ENCODE measurements at regions of chr11 and their contacts with region 1.

Region 1: GRCh38 chr11:75280227-75280701 is 39.7 kb downstream of the TPBGL start:
- DNase-seq: peak; percentile 65
- H3K4me3 ChIP-seq: no peak overlapping the region
- H3K27ac ChIP-seq: no peak overlapping the region
- H3K4me1 ChIP-seq: no peaks in the 10 kb centered on the region
- H3K27me3 ChIP-seq: no peaks in the 10 kb centered on the region
- CTCF ChIP-seq: peak; percentile 95 to 98 (median 97)
- POLR2A ChIP-seq: no peak

Region 2: DNA sequence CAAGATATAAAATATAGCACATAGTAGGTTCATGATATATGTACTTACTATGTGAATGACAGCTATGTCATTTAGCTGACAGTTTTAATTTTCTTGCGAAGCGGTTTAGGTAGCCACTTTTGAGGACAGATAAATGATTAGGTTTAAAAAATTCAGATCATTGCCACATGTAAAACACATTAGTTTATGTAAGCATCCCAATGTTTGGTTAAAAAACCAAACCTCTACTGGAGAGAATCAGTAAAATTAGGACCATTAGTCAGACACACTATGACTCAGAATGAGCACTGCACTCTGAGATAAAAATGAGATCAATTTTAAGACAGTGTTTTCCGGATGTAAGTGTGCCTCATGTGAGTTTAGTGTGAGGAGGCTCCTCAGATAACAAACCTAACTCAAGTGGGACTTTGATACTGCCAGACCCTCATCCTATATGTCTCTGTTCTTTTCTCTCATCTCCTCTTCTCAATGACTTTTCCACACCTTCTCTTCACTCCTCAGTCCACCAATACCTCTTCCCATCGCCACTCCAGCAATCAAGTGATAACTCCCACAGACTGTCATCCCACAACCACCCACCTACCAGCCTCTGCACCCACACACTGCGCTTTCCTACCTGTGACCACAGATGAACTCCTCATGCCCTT is 176.8 kb before region 1 on chr11:
- intact Hi-C with region 1: no loop called
- DNase-seq: no peak
- H3K4me3 ChIP-seq: no peak overlapping the region
- H3K27ac ChIP-seq: no peak overlapping the region
- H3K4me1 ChIP-seq: no peaks in the 10 kb centered on the region
- H3K27me3 ChIP-seq: no peaks in the 10 kb centered on the region
- CTCF ChIP-seq: no peak
- POLR2A ChIP-seq: no peak

Region 3: DNA sequence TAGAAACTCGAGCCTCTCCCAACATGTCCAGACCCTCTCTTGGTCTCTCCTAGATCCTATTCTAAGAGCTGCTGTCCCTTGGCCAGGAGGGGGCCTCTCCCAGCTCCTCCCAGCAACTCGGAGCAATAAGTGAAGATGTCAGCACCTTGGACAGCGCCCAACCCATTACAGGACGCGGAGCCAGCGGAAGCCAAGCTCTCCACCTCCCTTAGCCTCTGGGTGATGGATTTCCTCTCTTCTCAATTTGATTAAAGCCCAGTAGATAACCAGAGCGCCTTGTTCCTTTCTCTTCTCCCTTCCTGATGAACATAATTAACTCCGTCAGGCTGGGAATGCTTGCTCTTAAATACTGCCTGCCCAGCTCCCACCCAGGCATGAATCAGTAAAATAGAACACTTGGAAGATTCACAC is 65.8 kb before region 1 on chr11:
- intact Hi-C with region 1: no loop called
- DNase-seq: peak; percentile 45
- H3K4me3 ChIP-seq: no peak overlapping the region
- H3K27ac ChIP-seq: no peak overlapping the region
- H3K4me1 ChIP-seq: no peaks in the 10 kb centered on the region
- H3K27me3 ChIP-seq: no peaks in the 10 kb centered on the region
- CTCF ChIP-seq: peak in 1 of 4 experiments; percentile 14
- POLR2A ChIP-seq: no peak

Region 4: GRCh38 chr11:75328426-75329277 is 48.4 kb after region 1 on chr11:
- intact Hi-C with region 1: loop called (anchors 5 kb)
- DNase-seq: peak; percentile 82
- H3K4me3 ChIP-seq: no peak overlapping the region
- H3K27ac ChIP-seq: peak overlapping the region; percentile 64 to 72
- H3K4me1 ChIP-seq: peaks cover 22% of the 10 kb centered on the region
- H3K27me3 ChIP-seq: no peaks in the 10 kb centered on the region
- CTCF ChIP-seq: peak; percentile 58 to 86 (median 80)
- POLR2A ChIP-seq: no peak

Region 5: DNA sequence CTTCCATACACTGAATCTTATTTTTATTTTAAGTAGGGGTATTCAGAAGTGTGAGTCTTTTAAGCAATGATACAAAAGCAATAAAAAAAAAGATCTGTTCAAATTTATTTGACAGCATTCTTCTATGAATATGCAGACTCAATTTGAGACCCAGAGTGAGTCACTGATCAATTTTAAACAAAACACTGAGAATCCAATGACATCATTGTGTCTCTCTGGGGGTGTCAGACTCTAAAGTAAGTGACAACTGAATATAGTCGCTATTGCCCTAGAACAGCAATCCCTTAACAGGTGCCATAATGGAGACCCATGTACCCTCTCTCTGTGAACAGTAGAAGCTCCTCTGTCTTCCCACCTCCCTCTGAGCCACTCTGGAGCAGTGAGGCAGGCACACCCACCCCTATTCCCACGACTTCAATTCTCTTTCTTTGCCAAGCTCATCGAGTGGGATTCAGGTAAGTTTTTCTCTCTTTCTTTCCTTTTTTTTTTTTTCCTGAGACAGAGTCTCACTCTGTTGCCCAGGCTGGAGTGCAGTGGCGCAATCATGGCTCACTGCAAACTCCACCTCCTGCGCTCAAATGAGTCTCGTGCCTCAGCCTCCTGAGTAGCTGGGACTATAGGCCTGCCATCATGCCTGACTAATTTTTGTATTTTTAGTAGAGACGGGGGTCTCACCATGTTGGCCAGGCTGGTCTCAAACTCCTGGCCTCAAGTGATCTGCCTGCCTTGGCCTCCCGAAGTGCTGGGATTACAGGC is 114.0 kb after region 1 on chr11:
- intact Hi-C with region 1: no loop called
- DNase-seq: no peak
- H3K4me3 ChIP-seq: no peak overlapping the region
- H3K27ac ChIP-seq: no peak overlapping the region
- H3K4me1 ChIP-seq: no peaks in the 10 kb centered on the region
- H3K27me3 ChIP-seq: no peaks in the 10 kb centered on the region
- CTCF ChIP-seq: no peak
- POLR2A ChIP-seq: no peak